ENCODE measurements at regions of chr17 and their contacts with region 1.

Region 1: GRCh38 chr17:40113110-40113906 is 8.5 kb upstream of the MSL1 start:
- DNase-seq: peak; percentile 77

Region 2: GRCh38 chr17:40026816-40027613 is 86.3 kb before region 1 on chr17:
- CTCF ChIA-PET with region 1: interaction called, 15 read pairs
- POLR2A ChIA-PET with region 1: no interaction called
- DNase-seq: peak; percentile 82

Region 3: DNA sequence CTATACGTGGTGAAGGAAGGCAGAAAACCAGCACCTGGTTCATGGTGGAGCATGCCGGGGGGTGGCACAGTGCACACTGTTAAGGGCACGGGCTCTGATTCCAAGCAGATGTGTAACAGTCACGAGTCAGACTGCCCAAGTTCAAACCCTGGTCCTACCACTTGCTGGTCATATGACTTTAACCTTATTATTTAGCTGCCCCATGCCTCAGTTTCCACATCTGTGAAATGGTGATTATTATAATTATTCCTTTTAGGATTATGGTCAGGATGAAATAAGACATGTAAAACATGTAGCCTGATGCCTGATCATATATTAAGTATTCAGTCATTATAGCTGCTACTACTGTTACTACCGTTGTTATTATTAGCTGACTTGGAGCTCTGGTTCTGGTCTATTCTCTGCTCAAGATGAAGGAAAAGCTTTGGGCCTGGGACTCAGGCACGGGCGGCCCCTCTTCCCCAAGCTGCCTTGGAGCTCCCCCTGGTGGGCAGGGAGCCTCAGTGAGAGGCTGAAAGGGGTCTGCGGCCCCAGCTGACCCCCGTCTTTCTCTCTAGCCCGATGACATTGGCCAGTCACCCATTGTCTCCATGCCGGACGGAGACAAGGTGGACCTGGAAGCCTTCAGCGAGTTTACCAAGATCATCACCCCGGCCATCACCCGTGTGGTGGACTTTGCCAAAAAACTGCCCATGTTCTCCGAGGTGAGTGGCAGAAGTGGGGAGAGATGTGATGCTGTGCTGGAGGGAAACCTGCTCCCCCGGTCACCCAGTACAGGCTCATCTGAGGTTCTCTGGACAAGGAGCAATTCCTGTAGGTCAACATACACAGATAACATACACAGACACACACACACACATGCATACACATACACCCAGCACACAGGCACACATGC is 26.9 kb before region 1 on chr17:
- CTCF ChIA-PET with region 1: interaction called, 14 read pairs
- POLR2A ChIA-PET with region 1: interaction called, 8 read pairs
- DNase-seq: peak; percentile 73

Region 4: DNA sequence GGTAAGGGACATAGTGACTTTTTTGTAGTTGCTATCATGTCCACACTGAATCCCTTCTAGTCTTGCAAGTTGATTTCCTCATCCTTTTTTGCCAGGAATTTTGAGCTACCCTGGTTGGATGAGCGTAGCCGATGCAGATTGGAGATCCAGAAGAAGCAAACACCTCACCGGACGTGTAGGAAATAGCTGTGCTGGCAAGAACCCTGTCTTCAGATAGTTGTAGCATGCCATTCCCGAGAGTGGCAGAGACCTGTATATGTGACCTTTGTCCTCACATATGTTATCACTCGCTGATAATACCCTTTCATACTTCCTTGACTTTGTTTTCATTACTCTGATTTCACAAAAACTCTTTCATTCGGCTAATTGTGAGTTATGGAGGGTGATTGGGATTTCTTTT is 20.9 kb after region 1 on chr17:
- CTCF ChIA-PET with region 1: interaction called, 8 read pairs
- POLR2A ChIA-PET with region 1: interaction called, 117 read pairs
- DNase-seq: no peak

Region 5: DNA sequence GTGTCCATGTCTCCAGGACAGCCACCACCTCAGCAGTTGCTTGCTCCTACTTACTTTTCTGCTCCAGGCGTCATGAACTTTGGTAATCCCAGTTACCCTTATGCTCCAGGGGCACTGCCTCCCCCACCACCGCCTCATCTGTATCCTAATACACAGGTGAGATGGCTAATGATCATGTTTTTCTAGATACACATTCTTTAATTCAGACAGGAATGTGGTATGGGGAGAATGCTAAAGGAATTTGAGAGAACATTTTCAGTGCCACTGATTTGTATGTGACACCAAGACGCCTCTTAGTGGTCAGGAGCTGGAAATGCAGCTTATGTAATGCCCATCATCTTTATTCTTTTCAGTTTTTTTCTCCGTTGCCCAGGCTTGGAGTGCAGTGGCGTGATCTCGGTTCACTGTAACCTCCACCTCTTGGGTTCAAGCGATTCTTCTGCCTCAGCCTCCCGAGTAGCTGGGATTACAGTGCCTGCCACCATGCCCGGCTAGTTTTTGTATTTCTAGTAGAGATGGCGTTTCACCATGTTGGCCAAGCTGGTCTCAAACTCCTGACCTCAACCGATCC is 55.0 kb after region 1 on chr17:
- CTCF ChIA-PET with region 1: interaction called, 82 read pairs
- POLR2A ChIA-PET with region 1: interaction called, 24 read pairs
- DNase-seq: peak; percentile 46

Region 6: DNA sequence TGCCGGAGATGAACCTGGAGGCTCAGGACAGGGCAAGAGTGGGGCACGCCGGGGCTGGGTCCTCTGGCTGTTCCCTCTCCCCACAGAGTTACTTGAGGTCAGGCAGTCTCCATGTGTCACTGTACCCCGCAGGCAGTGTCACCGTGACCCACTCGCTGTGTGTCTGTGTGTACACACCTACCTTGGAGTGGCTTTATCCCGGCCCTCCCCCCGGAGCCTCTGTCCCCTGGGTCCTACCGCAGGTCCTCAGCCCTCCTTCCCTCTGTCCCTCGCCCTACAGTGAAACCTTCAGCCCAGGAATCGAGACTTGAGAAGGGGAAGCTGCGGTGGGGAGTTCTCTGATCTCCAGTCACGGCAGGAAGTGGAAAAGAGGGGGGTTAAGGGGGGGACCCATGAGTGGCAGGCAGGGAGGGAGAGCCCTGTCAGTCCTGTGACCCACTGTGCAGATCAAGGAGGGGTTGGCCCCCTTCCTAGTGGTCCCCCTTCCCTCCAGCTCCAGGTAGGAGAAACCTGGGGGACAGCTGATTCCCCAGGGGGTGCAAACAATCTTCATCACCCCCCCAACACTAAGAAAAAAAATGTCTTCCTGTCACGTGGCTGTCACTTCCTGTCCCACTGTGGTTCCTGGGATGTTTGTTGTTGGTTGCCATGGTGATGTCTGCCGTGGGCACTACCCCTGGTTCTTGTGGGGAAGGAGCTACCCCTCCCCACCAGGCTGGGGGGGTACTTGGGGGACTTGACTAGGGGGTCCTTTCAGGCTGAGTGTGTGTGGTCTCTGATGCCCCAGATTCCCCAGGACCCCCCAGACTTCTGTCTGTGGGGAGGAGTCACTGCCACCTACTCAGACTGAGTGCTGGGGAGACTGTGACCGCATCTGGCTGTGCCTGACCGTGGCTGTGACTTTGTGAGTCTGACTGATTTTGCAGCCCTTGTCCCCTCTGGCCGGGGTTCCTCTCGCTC is 209.3 kb after region 1 on chr17:
- CTCF ChIA-PET with region 1: no interaction called
- POLR2A ChIA-PET with region 1: no interaction called
- DNase-seq: no peak

Measured in HEK293T (cell line).